ENCODE measurements at regions of chr12 and their contacts with region 1.

Region 1: DNA sequence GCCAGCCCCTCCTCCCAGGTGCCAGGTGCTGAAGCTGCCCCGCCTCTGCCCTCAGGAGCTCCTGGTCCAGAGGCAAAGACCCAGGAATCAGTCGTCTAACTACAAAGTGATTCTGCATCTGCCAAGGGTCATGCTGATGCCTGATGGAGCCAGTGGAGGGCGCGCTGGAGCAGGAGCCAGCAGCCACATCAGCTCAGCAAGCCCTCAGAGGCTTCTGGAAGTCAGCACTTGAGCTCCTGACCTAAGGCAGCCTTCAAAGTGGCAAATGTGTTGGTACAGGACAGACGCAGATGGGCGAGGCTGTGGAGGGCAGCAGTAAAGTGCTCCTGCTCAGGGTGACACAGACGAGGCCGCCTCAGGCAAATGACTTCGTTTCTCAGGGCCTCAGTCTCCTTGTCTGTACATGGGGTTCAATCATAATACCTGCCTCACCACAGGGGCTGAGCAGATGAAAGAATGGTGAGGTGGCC is 10.9 kb downstream of the C12orf43 start:
- DNase-seq: peak; percentile 83
- ATAC-seq: peak; percentile 87
- H3K4me3 Mint-ChIP-seq: no peak overlapping the region
- H3K27ac Mint-ChIP-seq: peak overlapping the region; percentile 31
- H3K4me1 Mint-ChIP-seq: no peaks in the 10 kb centered on the region
- H3K27me3 Mint-ChIP-seq: no peaks in the 10 kb centered on the region

Region 2: GRCh38 chr12:121050725-121051124 is 45.3 kb after region 1 on chr12:
- CTCF ChIA-PET with region 1: interaction called, 10 read pairs
- POLR2A ChIA-PET with region 1: no interaction called
- intact Hi-C with region 1: no loop called
- DNase-seq: no peak
- ATAC-seq: no peak
- H3K4me3 Mint-ChIP-seq: no peak overlapping the region
- H3K27ac Mint-ChIP-seq: no peak overlapping the region
- H3K4me1 Mint-ChIP-seq: peaks cover 4% of the 10 kb centered on the region
- H3K27me3 Mint-ChIP-seq: peaks cover 2% of the 10 kb centered on the region